ENCODE measurements at regions of chr17 and their contacts with region 1.

Region 1: DNA sequence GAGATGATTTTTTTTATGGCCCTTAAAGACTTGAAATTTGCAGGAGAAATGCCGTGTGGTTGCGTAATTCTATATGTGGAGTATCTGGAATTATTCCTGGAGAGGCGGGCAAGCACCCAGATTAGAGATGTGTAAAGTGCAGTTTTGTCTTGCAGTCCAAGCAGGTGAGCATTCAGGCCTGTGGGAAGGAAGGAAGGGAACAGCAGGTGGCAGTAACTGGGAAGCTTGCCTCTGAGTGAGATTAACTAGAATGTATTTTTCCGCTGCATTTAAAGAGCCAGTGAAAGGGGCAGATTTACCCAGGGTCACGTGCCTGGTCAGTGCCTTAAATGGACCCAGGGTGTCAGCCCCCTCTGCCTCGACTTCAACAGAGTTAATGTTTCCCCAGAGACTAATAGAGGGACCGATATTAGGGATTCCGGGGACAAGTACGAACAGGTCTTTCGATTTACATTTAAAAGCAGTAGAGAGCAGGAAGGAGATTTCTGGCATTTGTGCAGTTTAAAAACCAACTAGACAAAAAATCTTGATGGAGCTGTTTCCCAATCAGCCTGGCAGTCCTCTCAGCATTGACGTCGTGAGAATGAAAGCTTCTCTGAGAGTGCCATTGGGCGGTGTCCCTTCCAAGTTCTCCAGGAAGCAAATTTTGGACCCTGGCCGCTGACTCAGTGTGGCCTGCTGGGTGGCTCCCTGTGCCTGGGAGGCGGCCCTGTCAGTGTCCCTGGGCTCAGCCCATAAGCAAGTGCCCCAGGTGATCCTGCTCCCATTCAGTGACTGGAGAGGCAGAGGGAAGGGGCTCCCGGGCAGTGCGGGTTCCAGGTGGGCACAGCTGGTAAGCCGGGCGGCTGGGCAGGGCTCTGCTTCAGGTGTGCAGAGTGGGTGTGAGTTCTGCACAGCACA is 38.2 kb downstream of the KSR1 start:
- DNase-seq: no peak
- CTCF ChIP-seq: peak; percentile 18

Region 2: GRCh38 chr17:27473748-27474609 is 20.5 kb before region 1 on chr17:
- CTCF ChIA-PET with region 1: interaction called, 20 read pairs
- POLR2A ChIA-PET with region 1: no interaction called
- DNase-seq: peak; percentile 58
- CTCF ChIP-seq: no peak